HEK293 (cell line): ENCODE measurements at regions of chr3 and their contacts with region 1.

Region 1: DNA sequence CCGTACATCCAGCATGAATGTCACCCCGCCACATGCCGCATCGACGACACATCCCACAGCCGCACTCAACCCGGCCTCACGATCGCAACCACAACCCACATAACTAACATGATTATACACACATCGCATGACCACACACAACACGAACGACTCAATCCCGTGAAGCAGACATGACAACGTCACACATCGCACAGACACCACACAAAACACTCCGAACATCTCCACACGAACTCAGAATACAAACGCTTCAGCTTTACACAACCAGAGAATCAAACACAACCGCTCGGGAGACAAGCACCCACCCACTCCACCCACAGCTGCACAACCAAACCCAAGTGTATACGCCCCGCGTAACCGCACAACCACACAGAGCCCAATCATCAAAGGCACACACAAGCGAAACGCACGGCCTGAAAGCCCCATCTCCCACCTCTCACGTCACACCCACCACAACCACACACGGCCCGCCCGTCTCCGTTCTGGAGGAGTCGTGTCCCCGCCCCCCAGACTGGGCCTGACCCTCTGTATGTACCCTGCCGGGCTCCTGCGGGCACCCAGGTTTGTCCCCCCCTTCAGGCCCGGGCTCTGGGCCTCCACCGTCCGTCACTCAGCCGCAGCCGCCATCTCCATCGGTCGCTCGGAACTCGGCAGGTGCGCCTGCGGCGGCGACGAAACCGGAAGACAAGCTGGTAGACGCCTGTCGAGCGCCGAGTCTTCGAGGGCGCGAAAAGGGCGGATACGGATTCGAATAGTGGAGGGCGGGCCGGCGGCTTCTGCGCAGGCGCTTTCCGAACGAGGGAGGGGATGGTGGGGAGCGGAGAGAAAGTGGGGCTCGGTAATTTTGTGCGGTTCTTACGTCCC is at the start of gene RBSN:
- H3K4me3 ChIP-seq: peak within 1 kb of the TSS; percentile 96
- H3K27ac ChIP-seq: peak within 1 kb of the TSS; percentile 48; the same call in 1 of the 2 replicates
- H3K4me1 ChIP-seq: peaks cover 4% of the 10 kb centered on the region; the same call in 1 of the 2 replicates
- CTCF ChIP-seq: peak; percentile 72; the same call in 1 of the 2 replicates

Region 2: GRCh38 chr3:14725013-14725412 is 373.7 kb before region 1 on chr3:
- CTCF ChIA-PET with region 1: no interaction called
- POLR2A ChIA-PET with region 1: no interaction called
- H3K4me3 ChIP-seq: no peak overlapping the region
- H3K27ac ChIP-seq: no peak overlapping the region
- H3K4me1 ChIP-seq: no peaks in the 10 kb centered on the region
- CTCF ChIP-seq: no peak

Region 3: DNA sequence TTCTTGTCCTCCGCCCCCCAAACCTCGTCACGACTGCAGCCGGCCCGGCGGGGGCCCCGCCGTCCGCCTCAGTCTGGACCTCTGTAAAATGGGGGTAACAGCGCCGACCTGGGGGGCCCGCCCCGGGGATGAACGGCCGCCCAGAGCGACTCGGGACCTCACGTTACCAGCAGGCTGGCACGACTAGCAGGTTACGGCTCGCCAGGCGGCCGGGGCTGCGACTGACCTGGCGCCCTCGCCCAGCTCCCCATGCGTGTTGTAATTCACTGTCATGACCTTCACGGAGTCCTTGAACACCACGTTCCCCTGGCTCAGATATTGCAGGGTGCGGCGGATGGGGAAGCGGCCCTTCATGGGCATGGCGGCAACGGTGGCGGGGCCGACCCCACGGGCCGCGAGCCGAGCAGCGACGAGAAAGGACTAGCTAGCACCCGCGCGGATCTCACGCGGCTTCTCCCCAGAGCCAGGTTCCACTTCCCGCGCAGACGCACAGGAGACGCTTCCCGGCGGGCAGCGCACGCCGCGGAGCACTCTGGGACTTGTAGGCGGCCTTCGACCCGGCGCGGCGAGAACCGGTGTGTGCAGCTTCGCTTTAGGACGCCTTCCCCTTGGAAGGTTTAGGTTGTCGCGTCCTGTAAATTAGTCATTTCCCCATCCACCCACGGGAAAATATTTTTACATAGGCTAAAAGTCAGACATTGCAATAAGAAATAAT is 33.7 kb before region 1 on chr3 and contains the start of gene MRPS25:
- CTCF ChIA-PET with region 1: no interaction called
- POLR2A ChIA-PET with region 1: interaction called, 19 read pairs
- H3K4me3 ChIP-seq: peak within 1 kb of the TSS; percentile 90
- H3K27ac ChIP-seq: peak within 1 kb of the TSS; percentile 54; the same call in 1 of the 2 replicates
- H3K4me1 ChIP-seq: no peaks in the 10 kb centered on the region
- CTCF ChIP-seq: no peak

Region 4: GRCh38 chr3:15215996-15216395 is 117.3 kb after region 1 on chr3:
- CTCF ChIA-PET with region 1: no interaction called
- POLR2A ChIA-PET with region 1: interaction called, 13 read pairs
- H3K4me3 ChIP-seq: no peak overlapping the region
- H3K27ac ChIP-seq: no peak overlapping the region
- H3K4me1 ChIP-seq: no peaks in the 10 kb centered on the region
- CTCF ChIP-seq: no peak